MCF 10A (cell line): ENCODE measurements at regions of chr6 and their contacts with region 1.

Region 1: GRCh38 chr6:130020907-130021629 is 2.7 kb downstream of the L3MBTL3 start:
- DNase-seq: peak; percentile 91
- H3K4me3 Mint-ChIP-seq: peak overlapping the region; percentile 94
- H3K27ac Mint-ChIP-seq: peak overlapping the region; percentile 75
- H3K4me1 Mint-ChIP-seq: no peaks in the 10 kb centered on the region
- H3K27me3 Mint-ChIP-seq: no peaks in the 10 kb centered on the region
- CTCF ChIP-seq: peak; percentile 69

Region 2: GRCh38 chr6:129598244-129599187 is 422.6 kb before region 1 on chr6:
- CTCF ChIA-PET with region 1: interaction called, 25 read pairs
- POLR2A ChIA-PET with region 1: interaction called, 7 read pairs
- intact Hi-C with region 1: loop called (anchors 1 kb)
- DNase-seq: peak; percentile 77
- H3K4me3 Mint-ChIP-seq: no peak overlapping the region
- H3K27ac Mint-ChIP-seq: no peak overlapping the region
- H3K4me1 Mint-ChIP-seq: no peaks in the 10 kb centered on the region
- H3K27me3 Mint-ChIP-seq: no peaks in the 10 kb centered on the region
- CTCF ChIP-seq: peak; percentile 71

Region 3: GRCh38 chr6:129730477-129731165 is 290.4 kb before region 1 on chr6:
- CTCF ChIA-PET with region 1: interaction called, 12 read pairs
- POLR2A ChIA-PET with region 1: no interaction called
- intact Hi-C with region 1: loop called (anchors 1 kb)
- DNase-seq: peak; percentile 61
- H3K4me3 Mint-ChIP-seq: no peak overlapping the region
- H3K27ac Mint-ChIP-seq: no peak overlapping the region
- H3K4me1 Mint-ChIP-seq: peaks cover 22% of the 10 kb centered on the region
- H3K27me3 Mint-ChIP-seq: no peaks in the 10 kb centered on the region
- CTCF ChIP-seq: peak; percentile 56

Region 4: DNA sequence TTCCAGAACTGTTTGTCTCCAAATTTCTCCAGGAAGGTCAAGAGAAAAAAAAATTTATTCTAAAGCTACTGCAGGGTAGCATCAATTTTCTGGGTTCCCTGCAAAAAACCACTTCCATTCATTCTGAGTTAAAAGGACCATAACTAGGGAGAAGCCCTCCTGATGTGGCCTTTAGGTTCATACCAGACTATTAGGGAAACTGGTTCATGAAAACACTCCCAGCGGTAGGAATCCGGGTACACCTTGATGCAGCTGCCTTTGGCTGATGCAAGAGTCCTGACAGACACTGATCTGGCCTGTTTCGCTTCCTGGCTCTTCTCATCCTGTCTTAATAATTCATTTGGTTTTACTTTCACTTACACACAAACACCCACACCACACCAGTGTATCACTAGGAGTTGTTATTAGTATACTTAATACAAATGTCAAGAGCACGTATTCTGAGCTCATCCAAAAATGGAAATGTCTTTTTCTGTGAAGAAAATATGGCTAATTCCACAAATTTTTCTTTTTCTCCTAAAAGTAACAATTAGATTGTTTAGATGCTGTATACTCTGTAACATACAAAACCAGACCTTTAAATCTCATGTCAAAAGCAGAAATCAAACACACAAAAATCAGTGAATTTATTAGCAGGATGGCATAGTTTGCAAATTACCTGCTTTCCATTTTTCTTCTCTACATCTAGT is 272.7 kb before region 1 on chr6:
- CTCF ChIA-PET with region 1: interaction called, 8 read pairs
- POLR2A ChIA-PET with region 1: interaction called, 7 read pairs
- intact Hi-C with region 1: loop called (anchors 5 kb)
- DNase-seq: peak; percentile 93
- H3K4me3 Mint-ChIP-seq: peak overlapping the region; percentile 47
- H3K27ac Mint-ChIP-seq: peak overlapping the region; percentile 87
- H3K4me1 Mint-ChIP-seq: peaks cover 36% of the 10 kb centered on the region
- H3K27me3 Mint-ChIP-seq: no peaks in the 10 kb centered on the region
- CTCF ChIP-seq: peak; percentile 28

Region 5: GRCh38 chr6:129893640-129894039 is 127.4 kb before region 1 on chr6:
- CTCF ChIA-PET with region 1: interaction called, 13 read pairs
- POLR2A ChIA-PET with region 1: interaction called, 4 read pairs
- intact Hi-C with region 1: loop called (anchors 1 kb)
- DNase-seq: peak; percentile 47
- H3K4me3 Mint-ChIP-seq: no peak overlapping the region
- H3K27ac Mint-ChIP-seq: no peak overlapping the region
- H3K4me1 Mint-ChIP-seq: peaks cover 11% of the 10 kb centered on the region
- H3K27me3 Mint-ChIP-seq: no peaks in the 10 kb centered on the region
- CTCF ChIP-seq: peak; percentile 52

Region 6: GRCh38 chr6:129936329-129937165 is 84.5 kb before region 1 on chr6:
- CTCF ChIA-PET with region 1: interaction called, 3 read pairs
- POLR2A ChIA-PET with region 1: no interaction called
- intact Hi-C with region 1: loop called (anchors 2 kb)
- DNase-seq: peak; percentile 90
- H3K4me3 Mint-ChIP-seq: peak overlapping the region; percentile 41
- H3K27ac Mint-ChIP-seq: no peak overlapping the region
- H3K4me1 Mint-ChIP-seq: no peaks in the 10 kb centered on the region
- H3K27me3 Mint-ChIP-seq: no peaks in the 10 kb centered on the region
- CTCF ChIP-seq: peak; percentile 53

Region 7: GRCh38 chr6:130037207-130037811 is 16.2 kb after region 1 on chr6:
- CTCF ChIA-PET with region 1: interaction called, 14 read pairs
- POLR2A ChIA-PET with region 1: no interaction called
- intact Hi-C with region 1: no loop called
- DNase-seq: peak; percentile 28
- H3K4me3 Mint-ChIP-seq: no peak overlapping the region
- H3K27ac Mint-ChIP-seq: no peak overlapping the region
- H3K4me1 Mint-ChIP-seq: peaks cover 7% of the 10 kb centered on the region
- H3K27me3 Mint-ChIP-seq: no peaks in the 10 kb centered on the region
- CTCF ChIP-seq: peak; percentile 47

Region 8: DNA sequence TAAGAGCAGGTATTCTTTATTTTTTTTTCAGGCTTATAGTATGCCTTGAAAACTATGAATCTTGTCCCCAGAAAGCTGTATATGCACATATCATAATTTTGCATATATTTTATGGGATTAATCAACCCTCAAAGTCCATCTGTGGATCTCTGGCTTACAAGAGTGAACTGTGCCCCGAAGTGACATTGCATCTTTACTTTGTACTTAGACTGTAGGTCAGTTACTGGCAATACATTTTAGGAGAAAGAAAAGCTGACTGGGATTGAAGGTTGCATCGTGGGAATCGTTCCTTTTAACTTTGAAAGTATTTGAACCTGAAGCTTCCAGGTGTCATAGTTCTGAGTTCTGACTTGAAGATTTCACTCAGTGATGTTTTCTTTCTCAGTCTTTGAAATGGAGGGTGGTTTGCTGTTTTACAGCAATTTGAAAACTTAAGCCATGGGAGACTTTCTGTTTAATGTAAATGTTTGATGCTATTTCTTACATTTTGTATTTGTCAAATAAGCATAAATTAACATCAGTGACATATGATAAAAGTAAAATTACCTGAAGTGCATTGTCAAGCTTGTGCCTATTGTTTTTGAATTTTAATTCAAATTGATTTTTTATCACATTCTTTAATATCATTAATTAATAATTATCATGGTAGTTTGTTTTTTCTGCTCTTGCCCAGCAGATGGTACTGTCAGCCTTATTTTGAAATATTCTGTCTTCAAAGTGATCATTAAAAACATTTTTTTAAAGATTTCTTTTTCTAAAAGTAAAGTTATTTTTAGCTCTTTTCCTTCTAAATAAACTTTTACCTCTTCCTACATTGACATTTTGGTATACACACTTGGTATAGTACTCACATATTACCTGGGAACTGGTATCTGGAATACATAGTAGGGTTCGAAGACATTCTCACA is 26.3 kb after region 1 on chr6:
- CTCF ChIA-PET with region 1: no interaction called
- POLR2A ChIA-PET with region 1: no interaction called
- intact Hi-C with region 1: no loop called
- DNase-seq: no peak
- H3K4me3 Mint-ChIP-seq: no peak overlapping the region
- H3K27ac Mint-ChIP-seq: no peak overlapping the region
- H3K4me1 Mint-ChIP-seq: no peaks in the 10 kb centered on the region
- H3K27me3 Mint-ChIP-seq: no peaks in the 10 kb centered on the region
- CTCF ChIP-seq: no peak